Activated B cell treated with CpG ODN at 0.5 μM for 24 hours (primary cell): ENCODE measurements at regions of chr12 and their contacts with region 1.

Region 1: GRCh38 chr12:49244176-49244575 is 20.7 kb upstream of the TUBA1C start:
- DNase-seq: no peak
- ATAC-seq: no peak
- H3K4me3 Mint-ChIP-seq: no peak overlapping the region
- H3K27ac Mint-ChIP-seq: no peak overlapping the region
- H3K4me1 Mint-ChIP-seq: no peaks in the 10 kb centered on the region
- H3K27me3 Mint-ChIP-seq: no peaks in the 10 kb centered on the region
- CTCF ChIP-seq: no peak

Region 2: GRCh38 chr12:48865434-48866290 is 378.5 kb before region 1 on chr12 and contains the start of gene RND1:
- CTCF ChIA-PET with region 1: no interaction called
- POLR2A ChIA-PET with region 1: interaction called, 10 read pairs
- intact Hi-C with region 1: no loop called
- DNase-seq: peak; percentile 64
- ATAC-seq: peak; percentile 90
- H3K4me3 Mint-ChIP-seq: peak within 1 kb of the TSS; percentile 95
- H3K27ac Mint-ChIP-seq: peak within 1 kb of the TSS; percentile 78
- H3K4me1 Mint-ChIP-seq: peaks cover 27% of the 10 kb centered on the region
- H3K27me3 Mint-ChIP-seq: no peaks in the 10 kb centered on the region
- CTCF ChIP-seq: no peak
- total RNA-seq, gene RND1: 4.9 and 5.9 TPM in 2 replicates